RWPE1 (cell line): ENCODE measurements at regions of chr20 and their contacts with region 1.

Region 1: DNA sequence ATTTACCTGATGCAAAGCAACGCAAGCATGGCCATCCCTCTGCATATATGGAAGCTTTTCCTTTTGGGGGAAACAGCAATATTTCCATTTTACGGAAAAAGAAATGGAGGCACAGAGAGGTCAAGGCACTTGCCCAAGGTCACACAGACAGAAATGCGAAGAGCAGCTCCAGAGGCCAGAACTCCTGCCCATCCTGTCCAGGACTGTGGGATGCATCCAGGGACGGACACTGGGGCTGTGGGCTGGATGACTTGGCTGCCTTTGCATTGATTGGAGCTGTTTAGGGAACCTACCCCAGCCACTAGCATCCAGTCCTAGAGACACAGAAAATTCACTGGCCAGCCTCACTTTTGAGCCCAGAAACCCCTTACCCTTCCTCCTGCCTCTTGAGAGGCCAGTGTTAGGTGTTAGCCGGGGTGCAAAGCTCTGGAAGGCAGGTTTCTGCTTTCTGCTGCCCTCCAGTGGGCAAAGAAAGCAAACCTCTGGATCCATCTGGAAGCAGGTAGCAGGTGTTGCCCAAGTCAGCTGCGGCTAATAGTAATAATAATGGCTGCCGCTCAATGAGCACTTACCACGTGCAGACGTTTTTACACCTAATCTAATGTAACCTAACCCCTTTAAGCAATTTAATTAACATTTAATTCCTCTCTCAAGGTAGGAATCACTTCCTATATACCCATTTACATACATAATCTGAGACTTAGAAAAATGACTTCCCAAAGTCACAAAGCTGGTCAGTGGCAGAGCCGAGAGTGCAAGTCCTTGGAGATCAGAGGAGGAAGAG is 31.7 kb upstream of the CCN5 start:
- DNase-seq: peak; percentile 93
- H3K27ac ChIP-seq: no peak overlapping the region
- CTCF ChIP-seq: peak; percentile 94

Region 2: GRCh38 chr20:44651684-44652423 is 31.6 kb before region 1 on chr20 and contains the start of gene ADA:
- CTCF ChIA-PET with region 1: interaction called, 20 read pairs
- POLR2A ChIA-PET with region 1: interaction called, 3 read pairs
- DNase-seq: peak; percentile 77
- H3K27ac ChIP-seq: peak within 1 kb of the TSS; percentile 93
- CTCF ChIP-seq: no peak

Region 3: DNA sequence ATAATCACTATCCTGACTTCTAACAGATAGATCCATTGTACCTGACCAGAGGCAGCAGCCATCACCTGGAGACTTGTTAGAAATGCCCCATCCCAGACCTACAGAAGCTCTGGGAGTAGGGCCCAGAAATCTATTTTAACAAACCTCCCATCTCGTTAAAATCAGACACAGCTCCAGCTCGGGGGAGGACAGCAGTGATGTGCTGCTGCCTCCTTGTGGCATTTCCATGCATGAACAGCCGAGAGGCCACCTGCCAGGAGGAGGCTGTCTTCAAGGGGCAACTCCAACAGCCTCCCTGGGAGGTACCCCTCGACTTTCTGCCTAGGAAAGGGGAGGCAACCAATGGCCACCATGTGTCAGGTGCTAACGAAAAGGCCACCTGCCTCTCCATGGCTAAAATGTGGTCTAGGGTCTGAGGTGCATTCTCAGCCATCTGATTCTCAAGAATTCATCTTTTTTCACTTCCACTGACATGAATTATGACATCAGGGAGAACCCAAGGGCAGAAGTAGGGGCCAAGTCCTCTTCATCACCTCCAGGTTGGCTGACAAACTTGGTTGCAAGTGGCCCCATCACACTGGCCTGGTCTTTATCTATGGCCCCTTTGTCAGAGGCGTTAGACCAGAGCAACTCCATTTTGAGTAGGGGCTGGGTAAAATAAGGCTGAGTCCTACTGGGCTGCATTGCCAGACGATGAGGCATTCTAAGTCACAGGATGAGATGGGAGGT is 50.0 kb after region 1 on chr20:
- CTCF ChIA-PET with region 1: interaction called, 184 read pairs
- POLR2A ChIA-PET with region 1: interaction called, 5 read pairs
- DNase-seq: peak; percentile 90
- H3K27ac ChIP-seq: no peak overlapping the region
- CTCF ChIP-seq: peak; percentile 99

Region 4: GRCh38 chr20:44747166-44748004 is 63.9 kb after region 1 on chr20:
- CTCF ChIA-PET with region 1: interaction called, 39 read pairs
- POLR2A ChIA-PET with region 1: no interaction called
- DNase-seq: peak; percentile 93
- H3K27ac ChIP-seq: peak overlapping the region; percentile 27
- CTCF ChIP-seq: peak; percentile 89